ENCODE measurements at regions of chr17 and their contacts with region 1.

Region 1: DNA sequence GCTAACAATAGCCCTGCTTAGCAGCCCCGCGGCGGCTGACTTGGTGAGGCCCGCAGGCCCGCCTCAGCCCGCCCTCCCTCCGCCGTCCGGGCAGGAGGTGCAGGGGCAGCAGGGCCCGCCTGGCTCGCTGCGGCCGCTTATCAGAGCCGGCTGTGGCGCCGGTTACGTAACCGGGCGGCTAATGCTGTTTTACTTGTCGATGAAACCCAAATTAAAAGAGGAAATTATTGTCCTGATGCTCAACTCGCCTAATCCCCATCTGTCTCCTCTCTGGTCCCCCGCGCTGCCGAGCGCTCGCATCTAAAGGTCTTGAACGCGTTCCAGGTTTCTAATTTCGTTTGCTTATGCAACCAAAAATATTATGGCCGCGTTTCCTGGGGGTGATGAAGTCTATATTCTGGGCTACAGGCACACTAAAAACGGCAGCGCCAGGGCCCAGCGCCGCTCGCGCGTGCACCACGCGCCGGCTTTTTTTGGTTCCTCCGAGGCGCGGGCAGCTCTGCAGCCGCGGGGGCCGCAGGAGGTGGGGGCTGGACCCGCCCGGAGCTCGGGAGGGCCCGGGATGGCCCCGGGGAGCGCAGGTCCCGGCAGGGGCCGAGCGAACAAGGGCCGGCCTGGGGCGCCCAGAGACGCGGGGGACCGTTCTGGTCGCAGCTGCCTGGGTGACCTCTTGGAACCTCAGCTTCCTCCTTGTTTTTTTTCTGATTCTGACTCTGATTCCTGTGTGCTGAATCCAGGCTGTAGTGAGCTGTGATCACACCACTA is 65.2 kb upstream of the TOB1 start:
- DNase-seq: peak in 1 of 2 experiments; percentile 86
- ATAC-seq: peak; percentile 66 to 70
- H3K4me3 ChIP-seq: peak overlapping the region; percentile 27; the same call in 2 of the 3 replicates
- H3K27ac ChIP-seq: peak overlapping the region; percentile 94 to 98
- H3K4me1 ChIP-seq: peaks cover 63% of the 10 kb centered on the region
- CTCF ChIP-seq: no peak
- EP300 ChIP-seq: no peak; a peak in 1 of 5 replicates
- POLR2A ChIP-seq: peak; percentile 30
- RAD21 ChIP-seq: peak in 1 of 2 experiments; percentile 37; a peak in 3 of 5 replicates

Region 2: DNA sequence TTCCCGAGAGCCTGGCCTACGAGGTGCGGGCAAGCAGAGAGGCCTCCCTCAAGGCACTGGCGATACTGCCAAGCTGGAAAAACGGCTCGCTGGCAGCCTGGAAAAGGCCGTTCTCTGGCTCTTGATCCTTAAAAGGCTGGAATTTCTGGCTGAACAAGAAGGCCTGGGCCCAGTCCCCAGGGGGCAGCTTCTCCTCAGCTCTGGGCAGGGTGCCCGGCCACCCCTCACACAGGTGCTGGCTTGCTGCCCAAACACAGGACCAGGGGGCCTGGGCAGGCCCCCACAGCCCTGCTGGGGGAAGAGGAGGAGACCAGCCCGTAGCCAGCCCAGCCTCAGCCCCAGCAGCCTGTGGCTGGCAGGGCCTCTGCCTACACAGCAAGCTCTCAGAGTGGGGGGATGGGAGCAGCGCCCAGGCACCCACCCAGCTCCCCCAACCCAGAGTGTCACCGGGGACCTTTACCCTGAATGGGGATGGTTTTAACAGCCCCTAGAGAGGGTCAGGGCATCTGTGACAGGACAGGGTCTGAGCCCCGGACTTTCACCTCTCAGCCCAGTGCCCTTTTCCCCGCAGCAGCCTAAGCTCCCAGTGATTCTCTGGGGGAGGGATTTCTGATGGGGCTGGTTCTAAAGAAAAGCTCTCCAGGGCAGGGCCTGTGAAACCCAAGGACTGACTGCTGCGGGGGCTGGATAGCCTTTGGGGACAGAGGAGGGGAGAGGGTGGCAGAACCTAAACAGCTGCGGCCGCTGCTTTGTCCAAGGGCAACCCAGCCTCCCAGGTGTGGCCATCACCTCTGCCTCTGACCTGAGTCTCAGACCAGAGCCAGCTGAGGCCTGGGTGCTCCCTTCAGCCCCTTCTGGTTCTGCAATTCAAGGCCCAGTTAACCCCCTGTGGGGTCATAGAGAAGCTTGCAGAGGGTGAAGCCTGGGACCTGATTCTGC is 26.5 kb before region 1 on chr17:
- CTCF ChIA-PET with region 1: interaction called, 11 read pairs
- POLR2A ChIA-PET with region 1: interaction called, 3 read pairs
- DNase-seq: no peak
- ATAC-seq: peak; percentile 33 to 58; a peak in 5 of 6 replicates
- H3K4me3 ChIP-seq: no peak overlapping the region
- H3K27ac ChIP-seq: peak overlapping the region; percentile 67 to 88
- H3K4me1 ChIP-seq: peaks cover 33% of the 10 kb centered on the region
- CTCF ChIP-seq: no peak
- EP300 ChIP-seq: no peak
- POLR2A ChIP-seq: no peak
- RAD21 ChIP-seq: no peak

Region 3: DNA sequence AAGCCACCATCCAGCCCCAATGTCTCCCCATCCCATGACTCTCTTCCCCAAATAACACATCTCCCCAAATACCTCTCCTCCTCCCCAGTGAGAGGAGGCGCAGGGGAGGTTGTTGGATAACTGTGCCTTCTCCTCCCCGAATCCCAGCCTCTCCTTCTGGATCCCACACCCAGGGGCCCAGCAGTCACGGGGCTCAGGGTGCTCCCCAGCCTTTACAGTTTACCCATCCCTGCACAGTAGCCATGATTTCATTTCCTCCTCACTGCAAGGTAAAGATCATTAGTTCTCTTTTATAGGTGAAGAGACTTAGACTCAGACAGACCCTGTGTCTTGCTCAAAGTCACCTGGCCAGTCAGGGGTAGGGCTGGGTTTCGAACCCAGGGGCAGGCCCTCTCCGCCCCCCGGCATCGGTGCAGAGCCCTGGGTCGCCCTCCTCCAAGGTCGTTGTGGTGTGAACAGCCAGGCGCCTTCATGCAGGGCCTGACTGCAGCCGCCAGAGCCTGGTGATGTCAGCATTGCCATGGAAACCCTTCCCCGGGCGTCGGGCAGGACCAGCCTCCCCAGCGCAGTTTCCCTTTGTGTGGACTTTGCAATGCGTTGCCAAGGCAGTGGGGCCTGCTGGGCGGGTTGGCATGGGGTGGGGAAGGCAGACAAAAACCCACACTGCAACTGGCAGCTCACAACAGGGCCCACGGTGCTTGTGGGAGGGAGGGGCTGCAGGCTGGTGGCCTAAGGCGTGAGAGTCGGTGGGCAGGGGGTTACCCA is 11.8 kb before region 1 on chr17:
- CTCF ChIA-PET with region 1: interaction called, 12 read pairs
- POLR2A ChIA-PET with region 1: interaction called, 8 read pairs
- DNase-seq: peak; percentile 96 to 99
- ATAC-seq: peak; percentile 92 to 93
- H3K4me3 ChIP-seq: no peak overlapping the region
- H3K27ac ChIP-seq: peak overlapping the region; percentile 87 to 92
- H3K4me1 ChIP-seq: peaks cover 79% of the 10 kb centered on the region
- CTCF ChIP-seq: no peak
- EP300 ChIP-seq: no peak
- POLR2A ChIP-seq: peak; percentile 25; the same call in 1 of the 2 replicates
- RAD21 ChIP-seq: peak; percentile 8 to 31; a peak in 1 of 5 replicates

Region 4: GRCh38 chr17:50944054-50944901 is 13.0 kb after region 1 on chr17:
- CTCF ChIA-PET with region 1: interaction called, 36 read pairs
- POLR2A ChIA-PET with region 1: interaction called, 80 read pairs
- DNase-seq: peak; percentile 94 to 97
- ATAC-seq: peak; percentile 79 to 83
- H3K4me3 ChIP-seq: peak overlapping the region; percentile 53
- H3K27ac ChIP-seq: peak overlapping the region; percentile 96 to 98
- H3K4me1 ChIP-seq: peaks cover 78% of the 10 kb centered on the region
- CTCF ChIP-seq: no peak
- EP300 ChIP-seq: peak; percentile 88 to 97; a peak in 3 of 5 replicates
- POLR2A ChIP-seq: peak; percentile 98
- RAD21 ChIP-seq: peak in 1 of 2 experiments; percentile 55; a peak in 1 of 5 replicates

Region 5: DNA sequence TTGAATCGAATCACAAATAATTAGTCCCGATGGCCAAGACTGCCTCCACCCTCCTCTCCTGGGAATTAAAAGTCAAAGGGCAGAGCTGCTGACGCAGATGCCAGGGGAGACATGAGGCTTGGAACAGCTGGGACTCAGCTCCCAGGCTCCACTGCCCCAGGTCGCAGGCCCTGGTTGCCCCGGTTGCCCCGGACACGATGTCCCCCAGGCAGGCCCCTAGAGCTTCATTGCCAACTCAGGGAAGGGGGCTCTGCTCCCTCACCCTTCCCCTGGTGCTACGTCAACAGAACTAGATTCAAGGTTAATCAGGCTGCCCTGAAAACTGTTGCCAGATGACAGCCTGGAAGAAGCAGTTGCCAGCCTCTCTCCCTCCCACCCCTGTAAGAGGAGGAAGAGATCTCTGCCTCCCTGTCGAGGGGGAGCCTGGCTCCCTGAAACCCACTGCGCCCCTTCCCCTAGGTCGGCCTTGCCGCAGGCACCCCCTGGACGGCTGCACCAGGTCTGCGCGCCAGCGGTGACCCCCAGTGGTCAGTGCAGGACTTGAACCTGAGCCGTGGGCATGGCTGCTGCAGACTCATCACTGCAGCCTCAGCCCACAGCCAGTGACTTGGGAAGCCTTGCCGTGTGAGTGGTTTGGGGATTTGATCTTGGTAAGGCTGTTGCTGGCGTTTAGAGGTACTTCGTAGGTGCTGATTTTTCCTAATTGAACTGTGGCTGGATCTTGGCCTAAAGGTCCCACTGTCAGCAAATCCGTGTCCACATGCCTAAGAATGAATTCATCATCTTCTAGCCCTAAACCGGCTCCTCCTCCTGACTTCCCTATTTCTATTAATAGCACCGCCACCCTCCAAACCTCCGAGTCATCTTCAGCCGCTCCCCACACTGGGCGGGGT is 18.9 kb after region 1 on chr17:
- CTCF ChIA-PET with region 1: interaction called, 36 read pairs
- POLR2A ChIA-PET with region 1: interaction called, 80 read pairs
- DNase-seq: peak; percentile 95 to 96
- ATAC-seq: peak; percentile 79 to 84
- H3K4me3 ChIP-seq: 0 out of 3 replicates have a peak overlapping the region, but pooled peaks have one; percentile 3
- H3K27ac ChIP-seq: peak overlapping the region; percentile 93 to 98
- H3K4me1 ChIP-seq: peaks cover 77% of the 10 kb centered on the region
- CTCF ChIP-seq: peak; percentile 99
- EP300 ChIP-seq: no peak
- POLR2A ChIP-seq: no peak
- RAD21 ChIP-seq: peak; percentile 100

Region 6: GRCh38 chr17:51120739-51121617 is 189.7 kb after region 1 on chr17 and contains the start of gene SPAG9:
- CTCF ChIA-PET with region 1: no interaction called
- POLR2A ChIA-PET with region 1: no interaction called
- DNase-seq: peak; percentile 97
- ATAC-seq: peak; percentile 80 to 82
- H3K4me3 ChIP-seq: peak within 1 kb of the TSS; percentile 77
- H3K27ac ChIP-seq: peak within 1 kb of the TSS; percentile 91 to 92
- H3K4me1 ChIP-seq: peaks cover 46% of the 10 kb centered on the region
- CTCF ChIP-seq: no peak
- EP300 ChIP-seq: no peak
- POLR2A ChIP-seq: peak; percentile 46
- RAD21 ChIP-seq: peak; percentile 4 to 5; a peak in 1 of 5 replicates
- polyA plus RNA-seq, gene SPAG9: 69.6 and 71.1 TPM in 2 replicates